Left ventricle myocardium inferior (tissue), 1 donor: ENCODE measurements at regions of chr5 and their contacts with region 1.

Region 1: DNA sequence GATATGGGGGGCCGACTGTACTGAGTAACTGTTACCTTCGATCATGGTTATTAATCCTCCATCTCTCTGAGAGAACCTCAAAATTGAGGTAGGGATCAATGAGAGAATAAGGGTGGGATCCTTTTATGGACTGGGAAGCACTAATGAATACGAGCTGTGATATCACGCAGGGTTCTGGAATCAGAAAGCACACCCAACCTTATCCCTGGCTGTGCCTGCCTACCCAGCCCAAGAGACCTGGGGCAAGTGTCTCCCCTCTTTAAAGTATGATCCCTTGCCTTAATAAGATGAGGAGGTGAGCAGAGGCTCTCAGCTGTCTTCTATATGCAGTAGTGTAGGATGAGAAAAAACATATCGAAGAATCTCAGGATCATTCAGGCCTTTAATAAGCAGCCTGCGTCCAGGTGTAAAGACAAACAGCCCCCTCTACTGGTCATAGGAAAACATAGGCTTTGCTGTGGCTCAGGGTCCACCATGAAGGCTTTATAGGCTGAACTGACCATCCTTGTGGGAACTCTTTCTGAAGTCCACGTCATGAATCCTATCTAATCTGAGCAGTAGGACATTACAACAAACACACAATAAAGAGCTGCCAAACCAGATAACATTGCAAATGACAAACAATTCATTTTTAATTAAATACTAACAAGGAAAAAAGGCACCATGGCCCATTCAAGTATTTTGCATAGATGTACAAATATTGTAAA is 16.8 kb downstream of the NIPAL4 start:
- DNase-seq: no peak
- H3K4me3 ChIP-seq: no peak overlapping the region
- H3K27ac ChIP-seq: no peak overlapping the region
- H3K4me1 ChIP-seq: peaks cover 38% of the 10 kb centered on the region
- H3K27me3 ChIP-seq: no peaks in the 10 kb centered on the region
- CTCF ChIP-seq: peak; percentile 76

Region 2: DNA sequence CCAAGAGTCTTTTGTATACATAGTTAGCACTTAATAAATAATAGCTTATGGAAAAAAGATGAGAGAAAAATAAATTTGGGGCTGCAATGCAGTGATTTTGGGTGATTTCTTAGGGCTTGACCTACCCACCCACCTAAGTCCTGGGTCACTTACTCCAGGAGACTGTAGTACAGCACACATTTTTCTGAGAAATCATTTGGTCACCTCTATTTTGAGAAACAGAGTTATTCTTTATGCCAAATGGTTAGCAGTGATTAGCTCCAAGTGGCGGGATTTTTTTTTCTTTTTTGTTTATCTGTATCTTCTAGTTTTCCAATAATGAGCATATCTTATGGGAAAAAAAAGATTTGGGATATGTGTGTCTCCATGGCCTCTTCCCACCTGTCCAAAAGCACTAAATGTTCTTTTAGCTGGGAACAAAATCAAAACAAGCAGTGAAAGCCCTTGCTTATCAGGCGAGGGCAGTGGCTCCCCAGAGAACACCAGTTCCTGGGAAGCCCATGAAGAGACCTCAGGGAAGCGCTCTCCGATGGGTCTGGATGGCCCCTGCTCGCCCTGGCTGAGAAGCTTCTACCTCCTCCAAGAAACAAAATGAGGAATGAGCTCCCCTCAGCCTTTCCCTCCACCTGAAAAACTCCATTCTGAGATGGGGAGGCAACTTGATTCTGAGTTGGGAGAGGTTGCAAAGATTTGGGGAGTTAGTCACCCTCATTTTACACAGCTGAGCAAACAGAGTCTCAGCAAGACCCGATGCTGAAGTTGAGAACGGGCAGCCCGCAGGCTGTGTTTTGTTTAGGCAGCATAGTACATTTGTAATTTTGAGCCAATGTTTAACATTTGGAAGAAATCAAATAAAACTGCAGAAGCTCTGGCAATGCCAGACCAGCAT is 141.1 kb before region 1 on chr5:
- intact Hi-C with region 1: loop called (anchors 10 kb)
- DNase-seq: peak; percentile 32
- H3K4me3 ChIP-seq: no peak overlapping the region
- H3K27ac ChIP-seq: peak overlapping the region; percentile 66
- H3K4me1 ChIP-seq: peaks cover 7% of the 10 kb centered on the region
- H3K27me3 ChIP-seq: no peaks in the 10 kb centered on the region
- CTCF ChIP-seq: no peak